ENCODE measurements at regions of chr2 and their contacts with region 1.

Region 1: GRCh38 chr2:209757163-209757562 is 14.5 kb upstream of the UNC80 start:
- DNase-seq: no peak

Region 2: DNA sequence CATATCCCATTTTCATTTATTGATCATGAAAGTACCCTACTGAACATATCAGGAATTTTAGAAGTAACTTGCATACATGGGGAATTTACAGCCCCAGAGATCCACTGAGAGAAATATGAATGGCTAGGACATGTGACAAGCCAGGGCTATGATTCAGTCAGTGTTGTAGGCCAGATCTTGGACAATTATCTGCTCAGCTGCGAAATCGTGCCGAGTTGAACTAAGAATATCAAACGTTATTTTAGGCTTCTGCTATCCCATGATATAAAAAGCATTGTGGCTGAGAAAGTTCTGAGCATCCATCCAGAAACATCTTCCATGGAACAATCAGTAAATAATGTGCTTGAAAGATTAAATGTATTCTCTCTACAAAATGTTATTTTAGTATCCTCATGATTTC is 71.2 kb before region 1 on chr2:
- intact Hi-C with region 1: no loop called
- DNase-seq: no peak

Region 3: DNA sequence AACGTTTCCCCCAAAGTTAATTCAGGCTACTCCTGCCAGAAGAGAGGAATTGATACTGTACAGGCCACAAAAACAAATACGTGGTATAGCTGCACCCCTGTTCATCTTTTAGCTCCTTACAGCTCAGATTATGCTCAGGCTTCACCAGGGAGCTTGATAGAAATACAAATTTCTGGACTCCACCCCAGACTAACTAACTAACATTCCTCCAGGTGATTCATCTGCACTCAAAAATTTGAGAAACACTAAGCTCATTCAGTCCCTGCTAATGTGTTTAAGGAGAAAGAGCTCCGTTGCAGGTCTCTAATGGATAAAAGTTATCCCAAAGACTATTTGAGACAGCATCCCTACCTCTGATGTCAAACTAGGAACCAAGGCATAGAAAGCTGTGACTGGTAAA is 22.4 kb before region 1 on chr2:
- intact Hi-C with region 1: loop called in 1 of 2 experiments (anchors 1 kb)
- DNase-seq: no peak

Measured in posterior vena cava (tissue), 2 donors.